Dorsolateral prefrontal cortex (tissue), 120 donors: ENCODE measurements at regions of chr9 and their contacts with region 1.

Region 1: DNA sequence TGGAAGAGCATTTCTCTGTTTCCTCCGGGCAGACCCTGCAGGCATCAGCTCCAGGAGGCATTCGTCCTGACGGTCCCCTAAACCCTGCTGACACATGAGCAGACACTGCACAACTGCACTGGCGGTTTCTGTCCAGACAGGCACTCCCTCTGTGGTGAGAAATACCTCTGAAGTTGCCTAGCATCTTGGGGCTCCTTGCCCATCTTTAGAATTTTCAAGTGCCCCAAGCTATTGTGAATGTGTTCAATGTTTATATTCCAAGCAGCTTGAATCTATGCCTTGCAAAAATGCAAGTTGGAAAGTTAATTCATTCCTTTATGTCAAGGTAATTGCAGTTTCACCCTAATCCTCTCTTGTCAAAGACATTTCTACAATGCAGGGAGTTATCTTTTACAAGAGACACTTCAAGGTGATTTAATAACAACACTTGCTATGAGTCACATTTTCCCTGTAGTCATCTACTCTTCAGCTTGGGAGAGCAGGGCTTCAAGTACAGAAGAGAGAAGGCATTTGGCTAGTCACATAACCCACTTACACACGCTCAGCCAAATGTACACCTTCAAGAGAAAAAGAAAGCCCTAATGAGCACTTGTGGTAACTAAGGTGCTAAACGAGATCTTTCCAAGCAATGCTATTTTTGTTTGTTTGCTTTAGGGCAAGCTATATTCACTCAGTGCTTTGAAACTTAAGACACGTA is 302.5 kb downstream of the MLLT3 start:
- DNase-seq: no peak
- H3K4me3 ChIP-seq: no peak overlapping the region
- H3K27ac ChIP-seq: no peak overlapping the region
- H3K27me3 ChIP-seq: peaks cover 0 to 2% (median 0%) of the 10 kb centered on the region in 45 donors
- CTCF ChIP-seq: no peak

Region 2: GRCh38 chr9:20256284-20256948 is 63.4 kb before region 1 on chr9:
- intact Hi-C with region 1: loop called in 1 of 2 experiments (anchors 10 kb)
- DNase-seq: no peak
- H3K4me3 ChIP-seq: no peak overlapping the region
- H3K27ac ChIP-seq: no peak overlapping the region
- H3K27me3 ChIP-seq: no peaks in the 10 kb centered on the region
- CTCF ChIP-seq: no peak